Endothelial cell of umbilical vein (primary cell): ENCODE measurements at regions of chr11 and their contacts with region 1.

Region 1: GRCh38 chr11:36564376-36565030 is 3.3 kb upstream of the RAG1 start:
- DNase-seq: peak; percentile 64
- H3K4me3 ChIP-seq: no peak overlapping the region
- H3K27ac ChIP-seq: no peak overlapping the region
- H3K4me1 ChIP-seq: no peaks in the 10 kb centered on the region
- H3K27me3 ChIP-seq: peaks cover 4 to 27% of the 10 kb centered on the region in 2 experiments
- CTCF ChIP-seq: peak; percentile 42 to 54
- POLR2A ChIP-seq: no peak

Region 2: DNA sequence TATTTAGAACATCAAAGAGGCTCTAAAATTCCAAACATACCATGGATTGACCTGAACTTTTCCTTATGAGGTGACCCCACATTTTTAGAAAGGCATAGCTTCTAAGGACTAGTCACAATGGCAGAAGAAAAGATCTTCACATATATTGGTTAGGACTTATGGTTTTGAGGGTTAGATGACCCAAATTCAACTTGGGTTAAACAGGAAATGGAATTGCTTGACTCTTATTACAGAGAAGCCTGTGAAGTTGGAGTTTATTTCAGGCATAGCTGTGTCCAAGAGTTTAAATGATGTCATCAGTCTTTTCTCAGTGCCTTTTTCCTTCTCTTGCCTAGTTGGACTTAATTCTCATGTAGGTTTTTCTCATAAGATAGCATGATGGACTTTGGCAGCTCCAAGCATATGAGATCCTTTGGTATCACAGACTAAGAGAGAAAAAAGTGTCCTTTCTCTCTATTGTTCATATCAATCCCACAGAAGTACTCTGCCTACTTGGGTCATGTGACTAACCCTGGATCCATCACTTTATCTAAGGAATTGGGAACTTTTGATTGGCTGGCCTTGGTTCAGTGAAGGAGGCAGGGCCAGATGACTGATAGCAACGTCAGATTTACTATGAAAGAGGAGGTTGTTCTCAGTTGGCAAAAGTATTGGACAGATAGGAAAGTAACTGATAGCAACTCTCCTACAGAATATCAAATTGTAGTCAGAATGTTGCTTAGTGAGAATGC is 14.0 kb before region 1 on chr11:
- CTCF ChIA-PET with region 1: interaction called, 10 read pairs
- POLR2A ChIA-PET with region 1: no interaction called
- dilution Hi-C with region 1: no loop called
- intact Hi-C with region 1: no loop called
- DNase-seq: no peak
- H3K4me3 ChIP-seq: no peak overlapping the region
- H3K27ac ChIP-seq: no peak overlapping the region
- H3K4me1 ChIP-seq: no peaks in the 10 kb centered on the region
- H3K27me3 ChIP-seq: no peaks in the 10 kb centered on the region
- CTCF ChIP-seq: no peak
- POLR2A ChIP-seq: no peak

Region 3: DNA sequence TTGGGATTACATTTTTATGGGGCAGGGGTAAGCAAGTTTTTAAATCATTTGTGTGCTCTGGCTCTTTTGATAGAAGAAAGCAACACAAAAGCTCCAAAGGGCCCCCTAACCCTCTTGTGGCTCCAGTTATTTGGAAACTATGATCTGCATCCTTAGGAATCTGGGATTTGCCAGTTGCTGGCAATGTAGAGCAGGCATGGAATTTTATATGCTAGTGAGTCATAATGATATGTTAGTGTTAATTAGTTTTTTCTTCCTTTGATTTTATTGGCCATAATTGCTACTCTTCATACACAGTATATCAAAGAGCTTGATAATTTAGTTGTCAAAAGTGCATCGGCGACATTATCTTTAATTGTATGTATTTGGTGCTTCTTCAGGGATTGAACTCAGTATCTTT is 13.4 kb after region 1 on chr11:
- CTCF ChIA-PET with region 1: interaction called, 42 read pairs
- POLR2A ChIA-PET with region 1: no interaction called
- dilution Hi-C with region 1: no loop called
- intact Hi-C with region 1: no loop called
- DNase-seq: no peak
- H3K4me3 ChIP-seq: no peak overlapping the region
- H3K27ac ChIP-seq: no peak overlapping the region
- H3K4me1 ChIP-seq: no peaks in the 10 kb centered on the region
- H3K27me3 ChIP-seq: no peaks in the 10 kb centered on the region
- CTCF ChIP-seq: no peak
- POLR2A ChIP-seq: no peak

Region 4: DNA sequence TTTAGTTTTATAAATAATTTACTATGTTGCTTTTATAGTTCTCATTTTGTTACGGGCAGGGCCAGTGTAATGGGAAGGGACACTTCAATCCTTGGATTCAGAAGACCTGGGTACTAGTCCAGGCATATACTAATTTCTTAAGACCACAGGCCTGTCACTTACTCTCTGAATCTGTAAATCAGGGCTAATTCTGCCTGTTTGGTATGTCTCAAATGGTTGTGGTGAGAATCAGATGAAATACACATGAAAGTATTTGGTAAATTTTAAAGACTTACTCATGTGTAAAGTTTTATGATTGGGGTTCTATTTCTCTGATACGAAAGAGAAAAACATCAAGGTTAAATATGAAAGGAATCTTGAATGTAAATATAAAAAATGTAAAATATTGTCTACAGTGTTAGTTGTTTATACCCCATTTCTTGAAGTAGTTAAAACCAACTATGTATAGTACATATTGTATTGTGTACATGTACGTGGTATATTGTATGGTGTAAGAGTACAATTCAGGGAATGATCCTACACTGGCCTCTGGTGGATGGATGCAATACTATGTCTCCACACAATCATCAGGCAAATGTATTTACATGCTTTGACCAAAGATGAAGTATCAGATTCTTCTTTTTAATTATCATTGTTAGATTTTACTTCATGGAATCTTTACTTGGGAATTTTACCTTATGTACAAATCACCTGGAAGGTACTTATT is 58.1 kb after region 1 on chr11:
- CTCF ChIA-PET with region 1: interaction called, 12 read pairs
- POLR2A ChIA-PET with region 1: no interaction called
- dilution Hi-C with region 1: no loop called
- intact Hi-C with region 1: loop called (anchors 1 kb)
- DNase-seq: peak; percentile 41
- H3K4me3 ChIP-seq: no peak overlapping the region
- H3K27ac ChIP-seq: no peak overlapping the region
- H3K4me1 ChIP-seq: peaks cover 2% of the 10 kb centered on the region
- H3K27me3 ChIP-seq: no peaks in the 10 kb centered on the region
- CTCF ChIP-seq: peak; percentile 16 to 30
- POLR2A ChIP-seq: no peak

Region 5: DNA sequence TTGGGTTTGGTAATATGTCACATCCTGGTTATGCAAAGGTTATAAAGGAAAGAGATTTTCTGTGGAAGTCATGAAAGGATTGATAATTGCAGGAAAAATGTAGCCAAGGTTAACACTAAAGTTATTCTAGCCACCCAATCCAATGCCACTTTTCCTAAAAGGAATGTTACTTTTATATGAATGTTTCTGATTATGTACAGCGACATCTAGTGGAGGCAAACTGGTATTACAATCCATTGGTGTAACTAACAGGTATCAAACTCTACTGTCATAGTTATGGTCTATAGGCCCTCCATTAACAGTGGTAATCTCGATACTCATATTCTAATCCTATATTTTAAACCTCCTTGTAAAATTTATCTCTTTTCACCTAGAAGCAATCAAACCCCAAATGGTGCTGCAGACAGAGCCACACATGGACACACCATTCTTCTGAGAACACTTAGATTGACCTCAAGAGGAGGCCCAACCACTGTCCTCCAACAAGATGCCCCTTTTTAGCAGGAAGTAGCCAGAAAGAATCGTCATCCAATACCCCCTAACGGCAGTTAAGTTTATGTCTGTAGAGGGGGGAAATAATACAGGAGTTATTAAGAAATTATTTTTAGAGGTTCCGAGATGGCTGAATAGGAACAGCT is 108.4 kb after region 1 on chr11:
- CTCF ChIA-PET with region 1: interaction called, 201 read pairs
- POLR2A ChIA-PET with region 1: no interaction called
- dilution Hi-C with region 1: no loop called
- intact Hi-C with region 1: loop called (anchors 1 kb)
- DNase-seq: peak; percentile 53
- H3K4me3 ChIP-seq: no peak overlapping the region
- H3K27ac ChIP-seq: no peak overlapping the region
- H3K4me1 ChIP-seq: no peaks in the 10 kb centered on the region
- H3K27me3 ChIP-seq: no peaks in the 10 kb centered on the region
- CTCF ChIP-seq: peak; percentile 41 to 44
- POLR2A ChIP-seq: no peak

Region 6: DNA sequence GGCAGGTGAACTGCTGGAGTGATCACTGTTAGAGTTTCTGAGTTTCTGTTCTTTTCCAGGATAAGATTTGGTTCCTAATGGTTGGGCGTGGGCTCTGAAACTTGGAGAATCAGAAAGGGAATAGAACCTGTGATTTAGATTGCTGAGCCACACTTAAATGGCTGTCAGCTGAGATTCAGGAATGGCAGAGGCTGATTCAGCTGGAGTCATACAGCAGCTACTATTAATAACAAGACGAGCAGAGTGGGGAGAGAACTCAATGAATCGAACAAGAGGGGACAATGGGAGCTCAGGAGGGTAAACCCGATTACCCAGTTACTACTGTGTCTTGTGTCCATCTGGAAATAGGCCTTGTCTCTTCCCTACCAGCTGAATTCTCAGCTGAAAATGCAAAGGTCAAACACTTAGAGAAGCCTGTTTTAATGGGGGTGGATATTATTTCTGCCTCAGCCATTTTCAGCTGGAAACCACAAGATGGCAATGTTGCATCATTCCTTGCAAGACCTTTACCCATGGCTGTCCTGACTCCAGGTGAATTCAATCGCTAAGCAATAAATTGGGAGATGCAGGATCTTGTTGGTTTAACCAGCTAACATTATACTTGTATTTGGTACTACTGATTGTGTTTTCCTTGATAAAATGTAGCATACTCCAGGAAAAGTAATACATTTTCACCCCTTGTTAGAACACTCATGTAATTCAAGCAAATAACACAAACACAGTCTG is 138.0 kb after region 1 on chr11:
- CTCF ChIA-PET with region 1: interaction called, 18 read pairs
- POLR2A ChIA-PET with region 1: no interaction called
- dilution Hi-C with region 1: no loop called
- intact Hi-C with region 1: no loop called
- DNase-seq: peak; percentile 62
- H3K4me3 ChIP-seq: no peak overlapping the region
- H3K27ac ChIP-seq: no peak overlapping the region
- H3K4me1 ChIP-seq: no peaks in the 10 kb centered on the region
- H3K27me3 ChIP-seq: peaks cover 1 to 9% of the 10 kb centered on the region in 2 experiments
- CTCF ChIP-seq: peak; percentile 58 to 63
- POLR2A ChIP-seq: no peak

Region 7: DNA sequence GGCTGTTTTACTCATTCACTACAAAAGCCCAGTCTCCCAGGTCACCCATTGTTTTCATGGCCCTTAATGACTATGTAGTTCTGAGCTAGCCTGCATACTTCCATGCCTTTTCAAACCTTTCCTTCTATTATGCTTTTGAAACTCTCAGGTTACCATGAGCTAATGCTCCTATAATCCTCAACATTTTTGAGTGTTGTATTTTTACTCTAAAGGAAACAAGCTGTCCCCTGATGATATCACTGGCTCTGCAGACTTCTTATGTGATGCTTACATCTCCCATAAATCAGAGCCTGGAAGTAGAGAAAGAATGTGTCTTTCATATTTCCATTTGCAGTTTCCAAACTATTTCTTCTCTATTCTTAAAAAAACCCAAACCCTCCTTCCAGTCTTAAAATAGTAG is 192.6 kb after region 1 on chr11:
- CTCF ChIA-PET with region 1: no interaction called
- POLR2A ChIA-PET with region 1: no interaction called
- dilution Hi-C with region 1: no loop called
- intact Hi-C with region 1: no loop called
- DNase-seq: no peak
- H3K4me3 ChIP-seq: no peak overlapping the region
- H3K27ac ChIP-seq: no peak overlapping the region
- H3K4me1 ChIP-seq: no peaks in the 10 kb centered on the region
- H3K27me3 ChIP-seq: no peaks in the 10 kb centered on the region
- CTCF ChIP-seq: no peak
- POLR2A ChIP-seq: no peak